Activated naive CD8-positive, alpha-beta T cell treated with anti-CD3 and anti-CD28 coated beads, Interleukin-2, amount 10 ng/mL, durations not matched to agents 7 days and 5 days (primary cell): ENCODE measurements at regions of chr10 and their contacts with region 1.

Region 1: GRCh38 chr10:27155066-27155754 is at the start of gene MASTL:
- DNase-seq: peak; percentile 96
- ATAC-seq: peak; percentile 82
- H3K4me3 Mint-ChIP-seq: peak within 1 kb of the TSS; percentile 98
- H3K27ac Mint-ChIP-seq: peak within 1 kb of the TSS; percentile 100
- H3K4me1 Mint-ChIP-seq: peaks cover 30% of the 10 kb centered on the region
- H3K27me3 Mint-ChIP-seq: no peaks in the 10 kb centered on the region
- total RNA-seq, gene MASTL: 28.3 to 29.6 TPM

Region 2: DNA sequence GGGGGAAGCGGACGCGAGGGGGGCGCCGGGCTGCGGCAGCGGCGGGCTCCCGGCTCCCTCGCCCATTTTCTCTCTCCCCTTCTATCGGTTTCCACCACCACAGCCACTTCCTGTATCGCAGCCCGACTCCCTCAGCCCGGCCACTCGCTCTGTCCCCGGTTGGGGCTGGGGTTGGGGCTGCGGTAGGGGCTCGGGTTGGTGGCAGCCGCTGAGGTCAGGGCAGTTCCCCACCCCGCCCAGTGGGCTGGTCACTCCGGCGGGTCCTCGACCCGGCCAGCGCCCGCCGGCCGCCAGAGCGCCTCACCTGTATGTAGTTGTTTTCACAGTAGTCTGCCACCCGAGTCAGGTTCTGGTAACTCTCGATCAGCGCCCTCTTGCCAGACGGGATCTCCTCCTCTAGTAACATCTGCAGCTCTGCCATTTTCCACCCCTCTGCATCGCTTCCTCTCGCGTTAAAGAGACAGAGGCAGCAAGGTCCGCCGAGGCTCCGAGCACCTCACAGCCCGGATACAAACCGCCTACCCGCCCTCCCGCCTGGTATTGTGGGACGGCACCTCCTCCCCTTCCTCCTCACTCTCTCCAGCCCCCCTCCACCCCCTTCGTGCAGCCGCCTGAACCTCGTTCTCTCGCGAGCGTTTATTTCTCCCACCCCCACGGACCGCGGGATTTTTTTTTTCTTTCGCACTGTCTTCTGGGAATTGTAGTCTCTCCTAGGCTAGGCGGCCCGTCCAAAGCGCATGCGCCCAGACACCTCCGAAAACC is 294.6 kb before region 1 on chr10 and contains the start of gene ABI1:
- POLR2A ChIA-PET with region 1: interaction called, 12 read pairs
- DNase-seq: peak; percentile 96
- ATAC-seq: peak; percentile 89
- H3K4me3 Mint-ChIP-seq: peak within 1 kb of the TSS; percentile 96
- H3K27ac Mint-ChIP-seq: peak within 1 kb of the TSS; percentile 99
- H3K4me1 Mint-ChIP-seq: peaks cover 26% of the 10 kb centered on the region
- H3K27me3 Mint-ChIP-seq: peaks cover 11% of the 10 kb centered on the region
- total RNA-seq, gene ABI1: 54.5 to 54.6 TPM

Region 3: GRCh38 chr10:27099916-27100812 is 55.0 kb before region 1 on chr10 and contains the start of gene ANKRD26:
- POLR2A ChIA-PET with region 1: interaction called, 19 read pairs
- DNase-seq: peak; percentile 97
- ATAC-seq: peak; percentile 68
- H3K4me3 Mint-ChIP-seq: peak within 1 kb of the TSS; percentile 79
- H3K27ac Mint-ChIP-seq: peak within 1 kb of the TSS; percentile 84
- H3K4me1 Mint-ChIP-seq: peaks cover 33% of the 10 kb centered on the region
- H3K27me3 Mint-ChIP-seq: no peaks in the 10 kb centered on the region
- total RNA-seq, gene ANKRD26: 11.9 to 13.0 TPM

Region 4: DNA sequence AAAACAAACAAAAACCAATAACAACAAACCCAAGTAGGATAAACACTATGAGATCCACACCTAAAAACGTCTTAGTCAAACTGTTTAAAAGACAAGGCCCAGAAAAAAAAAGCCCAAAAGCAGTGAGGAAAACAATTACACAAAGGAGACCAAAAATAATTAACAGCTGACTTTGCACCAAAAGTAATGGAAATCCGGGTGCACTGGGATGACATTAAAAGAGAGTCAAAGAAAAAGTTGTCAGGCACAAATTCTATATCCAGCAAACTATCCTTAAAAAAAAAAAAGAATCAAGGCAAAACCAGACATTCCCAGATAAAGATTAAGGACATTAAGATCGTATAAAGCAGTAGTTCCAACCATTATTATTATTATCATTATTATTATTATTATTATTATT is 47.0 kb before region 1 on chr10:
- POLR2A ChIA-PET with region 1: interaction called, 12 read pairs
- DNase-seq: no peak
- ATAC-seq: no peak
- H3K4me3 Mint-ChIP-seq: no peak overlapping the region
- H3K27ac Mint-ChIP-seq: no peak overlapping the region
- H3K4me1 Mint-ChIP-seq: peaks cover 14% of the 10 kb centered on the region
- H3K27me3 Mint-ChIP-seq: no peaks in the 10 kb centered on the region

Region 5: GRCh38 chr10:27143686-27144085 is 11.5 kb before region 1 on chr10:
- POLR2A ChIA-PET with region 1: interaction called, 23 read pairs
- DNase-seq: no peak
- ATAC-seq: no peak
- H3K4me3 Mint-ChIP-seq: no peak overlapping the region
- H3K27ac Mint-ChIP-seq: no peak overlapping the region
- H3K4me1 Mint-ChIP-seq: peaks cover 13% of the 10 kb centered on the region
- H3K27me3 Mint-ChIP-seq: no peaks in the 10 kb centered on the region

Region 6: GRCh38 chr10:27241652-27242472 is 86.7 kb after region 1 on chr10:
- POLR2A ChIA-PET with region 1: interaction called, 40 read pairs
- DNase-seq: peak; percentile 91
- ATAC-seq: peak; percentile 59
- H3K4me3 Mint-ChIP-seq: peak overlapping the region; percentile 95
- H3K27ac Mint-ChIP-seq: peak overlapping the region; percentile 98
- H3K4me1 Mint-ChIP-seq: peaks cover 21% of the 10 kb centered on the region
- H3K27me3 Mint-ChIP-seq: no peaks in the 10 kb centered on the region

Region 7: DNA sequence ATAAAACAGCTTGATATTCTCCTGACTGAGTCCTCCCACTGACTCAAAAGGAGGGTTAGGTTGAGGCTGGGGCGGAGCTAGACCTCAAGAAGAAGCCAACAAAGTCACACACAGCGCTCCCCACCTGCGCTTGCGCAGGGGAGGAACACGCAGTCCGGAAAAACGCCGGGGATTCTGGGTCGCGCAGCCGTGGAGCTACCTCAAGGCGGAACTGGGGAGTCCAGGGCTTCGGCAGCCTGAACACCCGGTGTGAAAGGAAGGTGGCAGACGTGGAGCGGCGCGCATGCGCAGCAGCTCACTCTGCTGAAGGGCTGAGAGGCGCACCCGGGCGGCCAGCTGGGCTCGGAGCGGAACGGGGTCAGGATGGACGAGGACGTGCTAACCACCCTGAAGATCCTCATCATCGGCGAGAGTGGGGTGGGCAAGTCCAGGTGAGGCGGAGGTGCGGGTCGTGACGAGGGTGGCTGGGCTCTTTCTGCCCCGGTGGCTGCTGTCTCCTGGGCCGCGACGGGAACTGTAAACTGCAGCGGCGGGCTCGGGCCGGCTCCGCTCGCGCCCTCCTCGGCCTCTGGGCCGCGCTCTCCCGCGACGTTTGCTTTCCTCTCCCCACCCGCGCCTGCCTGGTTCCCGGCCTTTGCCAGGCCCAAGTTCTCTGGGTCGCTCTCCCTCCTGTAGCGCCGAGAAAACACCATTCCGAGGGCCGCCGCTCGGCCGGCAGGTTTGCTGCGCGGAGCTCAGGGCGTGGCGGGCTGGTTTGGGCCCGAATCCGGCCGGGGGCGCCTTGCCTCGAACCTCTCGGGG is 349.0 kb after region 1 on chr10 and contains the start of gene RAB18:
- POLR2A ChIA-PET with region 1: interaction called, 10 read pairs
- DNase-seq: peak; percentile 94
- ATAC-seq: peak; percentile 98
- H3K4me3 Mint-ChIP-seq: peak within 1 kb of the TSS; percentile 99
- H3K27ac Mint-ChIP-seq: peak within 1 kb of the TSS; percentile 99
- H3K4me1 Mint-ChIP-seq: peaks cover 39% of the 10 kb centered on the region
- H3K27me3 Mint-ChIP-seq: no peaks in the 10 kb centered on the region
- total RNA-seq, gene RAB18: 64.0 to 69.6 TPM